ENCODE measurements at regions of chr15 and their contacts with region 1.

Region 1: GRCh38 chr15:68383161-68384074 is 48.5 kb downstream of the ITGA11 start:
- DNase-seq: peak in 1 of 3 donors; percentile 44
- ATAC-seq: peak; percentile 76 to 86 (median 85)
- H3K4me3 ChIP-seq: no peak overlapping the region
- H3K27ac ChIP-seq: no peak overlapping the region
- H3K4me1 ChIP-seq: no peaks in the 10 kb centered on the region
- H3K27me3 ChIP-seq: no peaks in the 10 kb centered on the region
- CTCF ChIP-seq: peak; percentile 68 to 78 (median 74)
- POLR2A ChIP-seq: no peak

Region 2: DNA sequence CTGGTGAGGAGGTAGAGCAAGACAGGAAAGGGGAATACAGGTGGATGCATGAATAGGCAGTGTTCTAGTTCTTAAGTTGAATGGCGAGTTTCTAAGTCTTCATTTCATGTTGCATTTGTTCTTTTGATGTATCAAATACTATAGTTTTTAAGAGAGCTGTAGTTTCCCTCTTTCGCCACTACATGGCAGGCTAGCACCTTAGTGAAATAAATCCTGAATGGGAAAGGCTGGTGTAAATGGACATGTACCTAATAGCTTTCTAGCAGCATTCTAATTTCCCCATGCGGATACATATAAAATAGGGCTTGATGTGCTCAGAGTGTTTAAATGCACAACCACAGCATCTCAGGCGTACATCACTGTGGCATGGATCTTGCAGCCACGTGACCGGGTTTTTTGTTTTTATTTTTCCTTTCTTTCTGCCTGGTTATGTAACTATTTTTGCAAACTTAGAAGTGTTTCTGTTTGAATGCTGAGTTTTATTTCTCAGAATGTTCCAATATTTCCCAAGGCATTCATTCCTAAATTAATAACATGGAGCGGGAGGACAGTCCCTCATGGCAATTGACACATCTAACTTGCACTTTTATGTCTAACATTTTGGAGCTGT is 130.4 kb before region 1 on chr15:
- intact Hi-C with region 1: loop called in 1 of 2 experiments (anchors 10 kb)
- DNase-seq: no peak
- ATAC-seq: peak; percentile 58 to 72 (median 69)
- H3K4me3 ChIP-seq: no peak overlapping the region
- H3K27ac ChIP-seq: no peak overlapping the region
- H3K4me1 ChIP-seq: peaks cover 0 to 6% (median 0%) of the 10 kb centered on the region in 4 donors
- H3K27me3 ChIP-seq: no peaks in the 10 kb centered on the region
- CTCF ChIP-seq: peak; percentile 89 to 96 (median 92)
- POLR2A ChIP-seq: no peak

Region 3: GRCh38 chr15:68316061-68316804 is 67.2 kb before region 1 on chr15:
- intact Hi-C with region 1: loop called in 1 of 2 experiments (anchors 10 kb)
- DNase-seq: peak in 1 of 3 donors; percentile 38
- ATAC-seq: peak in 3 of 4 donors; percentile 33 to 50 (median 49)
- H3K4me3 ChIP-seq: no peak overlapping the region
- H3K27ac ChIP-seq: no peak overlapping the region
- H3K4me1 ChIP-seq: no peaks in the 10 kb centered on the region
- H3K27me3 ChIP-seq: no peaks in the 10 kb centered on the region
- CTCF ChIP-seq: peak in 3 of 4 donors; percentile 7 to 32 (median 19)
- POLR2A ChIP-seq: no peak

Region 4: GRCh38 chr15:68511073-68511991 is 127.9 kb after region 1 on chr15:
- intact Hi-C with region 1: no loop called
- DNase-seq: no peak
- ATAC-seq: no peak
- H3K4me3 ChIP-seq: no peak overlapping the region
- H3K27ac ChIP-seq: no peak overlapping the region
- H3K4me1 ChIP-seq: no peaks in the 10 kb centered on the region
- H3K27me3 ChIP-seq: no peaks in the 10 kb centered on the region
- CTCF ChIP-seq: no peak
- POLR2A ChIP-seq: no peak

Region 5: DNA sequence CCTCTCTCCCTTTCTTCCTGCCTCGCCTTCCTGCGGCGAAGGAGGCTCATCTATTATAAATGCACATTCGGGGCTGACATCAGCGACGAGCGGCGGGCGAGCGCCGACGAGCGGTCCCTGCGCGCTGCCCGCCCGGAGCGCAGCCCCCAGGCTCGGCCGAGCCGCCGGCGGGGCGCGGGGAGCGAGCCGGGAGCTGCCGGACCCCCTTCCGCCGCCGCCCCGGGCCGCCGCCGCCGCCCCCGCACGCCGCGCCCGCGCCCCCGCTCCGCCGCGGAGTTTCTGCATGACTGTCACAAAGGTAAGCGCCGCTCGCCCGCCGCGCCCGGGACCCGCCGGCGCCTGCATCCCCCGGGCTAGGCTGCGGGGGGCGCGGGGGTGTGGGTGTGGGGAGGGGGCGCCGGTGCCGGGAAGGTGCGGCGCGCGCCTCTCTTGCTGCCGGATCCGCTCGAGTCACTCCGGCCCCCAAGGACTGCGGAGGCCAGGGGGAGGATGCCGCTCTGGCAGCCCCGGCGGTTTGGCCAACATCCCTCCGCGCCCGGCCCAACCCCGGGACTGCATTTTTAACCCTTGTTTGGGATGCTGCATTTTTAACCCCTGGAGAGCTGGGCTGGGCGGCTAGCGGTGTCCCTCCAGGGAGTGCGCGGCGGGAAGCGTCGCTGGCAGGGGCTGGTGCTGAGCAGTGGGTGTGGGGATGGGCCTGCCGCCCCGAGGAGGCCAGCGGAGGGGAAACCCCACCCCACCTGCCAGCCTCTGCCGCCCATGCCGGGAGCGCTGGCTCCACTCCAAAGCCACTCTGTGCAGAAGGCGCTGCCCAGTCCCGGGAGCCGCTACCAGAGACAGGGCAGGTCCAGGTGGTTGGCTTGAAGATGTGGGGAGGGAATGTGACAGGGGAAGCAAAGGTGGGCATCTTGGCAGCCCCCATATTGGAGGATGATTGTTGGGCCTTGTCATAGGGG is 195.8 kb after region 1 on chr15 and contains the start of gene CORO2B:
- intact Hi-C with region 1: no loop called
- DNase-seq: peak in 1 of 3 donors; percentile 56
- ATAC-seq: peak in 1 of 4 donors; percentile 6
- H3K4me3 ChIP-seq: peak within 1 kb of the TSS; percentile 34 to 53 (median 48)
- H3K27ac ChIP-seq: no peak within 1 kb of the TSS
- H3K4me1 ChIP-seq: peaks cover 0 to 9% (median 0%) of the 10 kb centered on the region in 4 donors
- H3K27me3 ChIP-seq: peaks cover 0 to 11% of the 10 kb centered on the region in 2 donors
- CTCF ChIP-seq: no peak
- POLR2A ChIP-seq: no peak
- total RNA-seq, gene CORO2B: 0.18 to 0.68 (median 0.41) TPM

Region 6: DNA sequence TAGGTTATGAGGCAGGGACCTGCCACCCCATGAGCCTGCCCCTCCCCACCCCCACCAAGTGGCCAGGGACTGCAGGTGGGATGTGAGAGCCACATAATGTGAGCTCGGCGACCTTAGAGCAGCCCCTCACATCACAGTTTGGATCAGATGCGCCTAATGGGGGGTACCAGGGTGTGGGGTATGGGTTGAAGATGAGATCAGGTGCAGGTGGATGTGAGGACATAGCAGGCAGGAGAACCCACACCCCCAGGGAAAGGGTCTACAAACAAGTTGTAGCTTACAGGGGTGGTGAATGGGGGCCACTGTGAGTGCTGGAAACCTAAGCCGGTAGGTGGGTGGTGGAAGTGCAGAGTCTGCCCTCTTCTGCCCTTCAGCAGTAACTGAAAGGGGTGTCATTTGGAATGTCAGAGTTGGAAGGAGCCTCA is 289.4 kb after region 1 on chr15:
- intact Hi-C with region 1: no loop called
- DNase-seq: peak in 1 of 3 donors; percentile 28
- ATAC-seq: no peak
- H3K4me3 ChIP-seq: no peak overlapping the region
- H3K27ac ChIP-seq: no peak overlapping the region
- H3K4me1 ChIP-seq: no peaks in the 10 kb centered on the region
- H3K27me3 ChIP-seq: no peaks in the 10 kb centered on the region
- CTCF ChIP-seq: no peak
- POLR2A ChIP-seq: no peak